ENCODE measurements at regions of chr4 and their contacts with region 1.

Region 1: DNA sequence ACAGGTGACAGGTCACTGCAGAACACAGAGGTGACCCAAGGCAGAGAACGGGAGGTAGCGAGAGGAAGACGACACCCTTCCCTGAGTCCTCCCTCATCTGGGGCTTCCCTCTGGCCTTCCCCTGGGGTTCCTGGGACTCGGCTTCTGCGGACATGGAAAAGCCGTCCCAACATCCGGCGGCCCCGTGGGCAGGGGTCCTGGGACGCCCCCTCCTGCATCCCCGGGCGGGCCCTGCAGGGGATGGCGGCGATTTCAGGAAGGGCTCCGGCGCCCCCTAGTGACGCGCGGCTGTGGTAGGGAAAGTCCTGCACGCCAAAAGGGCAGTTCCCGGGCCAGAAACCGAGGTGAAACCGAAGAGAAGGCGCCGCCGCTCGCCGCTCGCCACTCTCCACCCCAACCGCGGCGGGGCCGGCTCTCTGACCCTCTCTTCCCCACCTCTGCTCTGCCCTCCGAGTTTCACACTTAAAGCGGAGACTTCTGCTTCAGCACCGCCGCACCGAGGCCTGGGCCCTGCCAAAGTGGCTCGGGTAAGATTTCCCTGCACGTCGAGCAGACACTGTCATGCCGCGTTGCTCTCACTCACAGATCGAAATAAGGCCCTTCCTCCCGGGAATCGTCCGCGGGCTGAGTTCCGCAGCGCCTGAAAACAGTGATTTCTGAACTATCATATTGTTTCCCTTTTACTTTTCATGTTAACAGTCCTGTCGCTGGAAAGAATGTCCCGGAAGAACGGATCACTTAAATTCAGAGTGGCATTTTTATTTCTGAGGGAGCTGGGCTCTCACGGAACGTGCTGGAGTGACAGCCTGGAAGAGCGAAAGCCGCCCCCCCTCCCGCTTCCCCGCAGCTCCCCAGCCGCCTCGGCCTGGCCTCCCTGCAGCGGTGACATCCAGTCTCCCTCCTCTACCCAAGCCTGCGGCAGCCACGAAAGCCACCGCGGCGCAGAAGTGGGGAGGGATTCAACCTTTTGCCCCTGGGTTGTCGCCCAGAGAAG is 110.6 kb downstream of the DCTD start:
- DNase-seq: peak; percentile 58 to 92 (median 84)

Region 2: DNA sequence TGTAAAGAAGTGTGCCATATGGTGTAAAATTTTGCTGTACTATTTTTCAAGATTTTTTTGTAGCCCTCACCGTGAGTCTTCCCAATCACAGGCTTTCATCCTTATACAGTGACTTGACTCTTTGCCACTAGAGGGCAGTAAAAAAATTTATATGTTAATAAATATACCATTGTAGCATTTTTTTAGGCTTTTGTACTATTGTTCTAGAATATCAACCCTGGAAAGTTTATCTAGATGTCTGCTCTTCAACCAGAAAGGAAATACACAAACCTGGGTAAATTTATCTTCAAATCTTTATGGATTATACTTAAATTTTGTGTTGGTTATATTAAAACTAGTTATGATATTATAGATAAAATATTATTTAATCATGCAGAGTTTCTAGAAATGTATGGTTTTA is 328.1 kb before region 1 on chr4:
- intact Hi-C with region 1: loop called (anchors 10 kb)
- DNase-seq: no peak